ENCODE measurements at regions of chr1 and their contacts with region 1.

Region 1: DNA sequence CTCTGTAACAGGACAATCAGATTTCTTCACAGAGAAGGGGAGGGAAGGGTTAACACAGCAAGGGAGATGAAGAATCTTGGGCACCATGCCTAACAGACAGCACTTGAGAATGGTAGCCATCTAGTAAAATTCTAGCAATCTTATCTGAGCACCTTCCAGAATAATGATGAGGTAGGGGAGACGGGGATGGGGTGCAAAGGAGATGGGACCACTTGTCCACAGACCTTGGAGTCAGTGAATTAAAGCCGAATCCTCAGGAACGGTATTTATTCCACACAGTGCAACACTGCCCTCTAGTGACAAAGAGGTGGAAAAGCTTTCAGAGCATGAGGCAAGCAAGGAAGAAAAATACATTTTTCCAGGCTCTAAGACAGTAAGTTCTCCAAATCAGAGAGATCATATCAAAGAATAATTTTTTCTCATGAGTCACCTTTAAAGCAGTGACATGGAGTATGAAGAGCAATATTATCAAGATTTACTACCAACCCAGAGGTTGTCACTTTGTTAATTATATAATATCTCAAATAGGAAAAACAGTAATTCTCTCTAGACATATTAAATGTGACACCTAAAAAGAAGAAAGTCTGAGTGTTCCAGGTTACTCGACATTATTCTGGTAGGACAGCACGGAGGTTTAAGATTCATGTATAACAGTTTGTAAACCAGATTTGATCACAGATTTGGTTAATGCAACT is 43.3 kb upstream of the LPAR3 start:
- DNase-seq: no peak
- ATAC-seq: peak; percentile 69
- H3K4me3 ChIP-seq: no peak overlapping the region
- H3K27ac ChIP-seq: no peak overlapping the region
- H3K4me1 ChIP-seq: no peaks in the 10 kb centered on the region
- H3K27me3 ChIP-seq: no peaks in the 10 kb centered on the region
- CTCF ChIP-seq: peak; percentile 83 to 86 (median 85)
- EP300 ChIP-seq: no peak
- POLR2A ChIP-seq: no peak
- RAD21 ChIP-seq: peak; percentile 89

Region 2: DNA sequence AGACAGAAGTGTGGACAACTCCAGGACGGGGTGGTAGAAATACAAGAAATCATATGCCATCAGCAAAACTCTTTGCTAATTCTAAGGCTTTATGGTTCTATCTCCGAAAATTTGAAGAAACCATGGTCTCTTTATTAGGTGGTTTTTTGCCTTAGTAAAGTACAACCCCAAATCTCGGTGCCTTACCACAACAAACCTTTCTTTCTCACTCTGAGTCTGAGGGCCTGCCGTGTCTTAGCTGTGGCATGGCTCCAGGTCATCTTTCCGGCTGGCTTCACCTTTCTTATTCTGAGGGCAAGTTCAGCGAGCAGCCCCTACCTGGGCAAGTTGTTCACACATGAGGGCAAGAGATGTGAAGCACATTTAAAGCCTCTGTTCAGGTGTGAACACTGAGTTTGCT is 1217.9 kb before region 1 on chr1:
- CTCF ChIA-PET with region 1: no interaction called
- POLR2A ChIA-PET with region 1: no interaction called
- RAD21 ChIA-PET with region 1: no interaction called
- SMC1A ChIA-PET with region 1: no interaction called
- in situ Hi-C with region 1: no loop called
- intact Hi-C with region 1: no loop called
- DNase-seq: no peak
- ATAC-seq: peak; percentile 81
- H3K4me3 ChIP-seq: no peak overlapping the region; the same call in 1 of the 2 replicates
- H3K27ac ChIP-seq: no peak overlapping the region
- H3K4me1 ChIP-seq: no peaks in the 10 kb centered on the region
- H3K27me3 ChIP-seq: no peaks in the 10 kb centered on the region
- CTCF ChIP-seq: no peak
- EP300 ChIP-seq: no peak
- POLR2A ChIP-seq: no peak
- RAD21 ChIP-seq: no peak

Region 3: GRCh38 chr1:84442256-84442655 is 494.0 kb before region 1 on chr1:
- CTCF ChIA-PET with region 1: interaction called, 6 read pairs
- POLR2A ChIA-PET with region 1: no interaction called
- RAD21 ChIA-PET with region 1: no interaction called
- SMC1A ChIA-PET with region 1: no interaction called
- in situ Hi-C with region 1: no loop called
- intact Hi-C with region 1: loop called (anchors 2 kb)
- DNase-seq: peak; percentile 73
- ATAC-seq: peak; percentile 99
- H3K4me3 ChIP-seq: no peak overlapping the region
- H3K27ac ChIP-seq: no peak overlapping the region
- H3K4me1 ChIP-seq: peaks cover 5% of the 10 kb centered on the region; the same call in 1 of the 2 replicates
- H3K27me3 ChIP-seq: no peaks in the 10 kb centered on the region
- CTCF ChIP-seq: peak; percentile 38 to 78 (median 43); a peak in 4 of 6 replicates
- EP300 ChIP-seq: no peak
- POLR2A ChIP-seq: no peak
- RAD21 ChIP-seq: peak; percentile 88

Region 4: GRCh38 chr1:84587099-84587498 is 349.2 kb before region 1 on chr1:
- CTCF ChIA-PET with region 1: no interaction called
- POLR2A ChIA-PET with region 1: no interaction called
- RAD21 ChIA-PET with region 1: no interaction called
- SMC1A ChIA-PET with region 1: no interaction called
- in situ Hi-C with region 1: no loop called
- intact Hi-C with region 1: no loop called
- DNase-seq: no peak
- ATAC-seq: no peak
- H3K4me3 ChIP-seq: no peak overlapping the region
- H3K27ac ChIP-seq: no peak overlapping the region
- H3K4me1 ChIP-seq: peaks cover 3% of the 10 kb centered on the region
- H3K27me3 ChIP-seq: no peaks in the 10 kb centered on the region
- CTCF ChIP-seq: no peak
- EP300 ChIP-seq: no peak
- POLR2A ChIP-seq: no peak
- RAD21 ChIP-seq: no peak

Region 5: GRCh38 chr1:84753516-84754385 is 182.5 kb before region 1 on chr1:
- CTCF ChIA-PET with region 1: interaction called, 18 read pairs
- POLR2A ChIA-PET with region 1: no interaction called
- RAD21 ChIA-PET with region 1: interaction called, 3 read pairs
- SMC1A ChIA-PET with region 1: interaction called, 10 read pairs
- in situ Hi-C with region 1: no loop called
- intact Hi-C with region 1: no loop called
- DNase-seq: peak; percentile 23
- ATAC-seq: peak; percentile 96
- H3K4me3 ChIP-seq: no peak overlapping the region
- H3K27ac ChIP-seq: no peak overlapping the region
- H3K4me1 ChIP-seq: no peaks in the 10 kb centered on the region
- H3K27me3 ChIP-seq: no peaks in the 10 kb centered on the region
- CTCF ChIP-seq: peak; percentile 90 to 93 (median 92)
- EP300 ChIP-seq: no peak
- POLR2A ChIP-seq: no peak
- RAD21 ChIP-seq: peak; percentile 99

Region 6: DNA sequence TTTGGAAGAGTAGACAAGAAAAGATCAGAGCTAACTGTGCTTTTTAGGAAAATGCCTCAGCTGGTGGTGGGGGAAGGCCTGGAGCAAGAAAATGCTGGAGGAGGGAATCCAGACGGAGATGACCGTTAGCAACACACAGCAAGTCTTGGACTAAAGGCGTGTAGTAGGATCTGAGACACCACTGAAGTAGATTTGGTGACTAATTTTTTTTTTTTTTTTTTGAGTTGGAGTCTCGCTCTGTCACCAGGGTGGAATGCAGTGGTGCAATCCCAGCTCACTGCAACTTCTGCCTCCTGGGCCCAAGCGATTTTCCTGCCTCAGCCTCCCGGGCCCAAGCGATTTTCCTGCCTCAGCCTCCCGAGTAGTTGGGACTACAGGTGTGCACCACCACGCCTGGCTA is 84.4 kb before region 1 on chr1:
- CTCF ChIA-PET with region 1: no interaction called
- POLR2A ChIA-PET with region 1: no interaction called
- RAD21 ChIA-PET with region 1: no interaction called
- SMC1A ChIA-PET with region 1: interaction called, 12 read pairs
- in situ Hi-C with region 1: no loop called
- intact Hi-C with region 1: no loop called
- DNase-seq: no peak
- ATAC-seq: no peak
- H3K4me3 ChIP-seq: no peak overlapping the region
- H3K27ac ChIP-seq: no peak overlapping the region
- H3K4me1 ChIP-seq: peaks cover 15% of the 10 kb centered on the region
- H3K27me3 ChIP-seq: no peaks in the 10 kb centered on the region
- CTCF ChIP-seq: no peak
- EP300 ChIP-seq: no peak
- POLR2A ChIP-seq: no peak
- RAD21 ChIP-seq: no peak

Region 7: DNA sequence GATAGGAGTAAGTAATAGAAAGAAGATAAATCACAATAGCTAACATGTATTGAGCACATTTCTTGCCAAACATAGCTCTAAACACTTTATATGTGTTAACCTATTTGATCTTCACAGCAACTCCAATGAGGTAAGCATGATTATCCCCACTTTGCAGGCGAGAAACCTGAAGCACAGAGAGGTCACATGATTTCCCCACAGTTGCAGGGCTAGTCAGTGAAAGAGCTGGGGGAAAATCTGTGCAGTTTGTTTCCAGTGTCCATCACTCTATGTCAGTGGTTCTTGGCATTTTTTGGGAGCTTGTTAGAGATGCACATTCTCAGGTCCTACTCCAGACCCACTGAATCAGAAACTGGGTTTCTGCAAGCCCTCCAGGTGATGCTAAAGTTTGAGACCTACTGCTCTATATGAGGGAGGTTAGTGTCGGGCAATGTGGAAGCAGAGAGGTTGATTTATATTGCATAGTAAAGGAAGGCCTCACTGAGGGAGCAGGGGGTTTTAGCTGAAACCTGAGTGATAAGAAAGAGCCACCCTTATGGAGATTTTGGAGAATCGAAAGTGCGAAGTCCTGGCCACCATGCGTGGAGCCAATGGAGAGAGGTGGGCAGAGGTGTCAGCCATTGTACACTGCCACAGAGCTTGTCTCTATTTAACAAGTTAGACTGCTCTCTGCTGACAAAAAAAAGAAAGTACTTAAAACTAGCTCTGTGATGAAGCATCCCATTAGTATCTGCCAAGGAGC is 91.2 kb after region 1 on chr1:
- CTCF ChIA-PET with region 1: interaction called, 319 read pairs
- POLR2A ChIA-PET with region 1: no interaction called
- RAD21 ChIA-PET with region 1: interaction called, 209 read pairs
- SMC1A ChIA-PET with region 1: interaction called, 214 read pairs
- in situ Hi-C with region 1: no loop called
- intact Hi-C with region 1: no loop called
- DNase-seq: no peak
- ATAC-seq: peak; percentile 96
- H3K4me3 ChIP-seq: no peak overlapping the region
- H3K27ac ChIP-seq: no peak overlapping the region
- H3K4me1 ChIP-seq: no peaks in the 10 kb centered on the region
- H3K27me3 ChIP-seq: no peaks in the 10 kb centered on the region
- CTCF ChIP-seq: peak; percentile 31 to 62 (median 33); a peak in 4 of 6 replicates
- EP300 ChIP-seq: no peak
- POLR2A ChIP-seq: no peak
- RAD21 ChIP-seq: peak; percentile 72

Measured in GM12878 (cell line).